ENCODE measurements at regions of chr11 and their contacts with region 1.

Region 1: DNA sequence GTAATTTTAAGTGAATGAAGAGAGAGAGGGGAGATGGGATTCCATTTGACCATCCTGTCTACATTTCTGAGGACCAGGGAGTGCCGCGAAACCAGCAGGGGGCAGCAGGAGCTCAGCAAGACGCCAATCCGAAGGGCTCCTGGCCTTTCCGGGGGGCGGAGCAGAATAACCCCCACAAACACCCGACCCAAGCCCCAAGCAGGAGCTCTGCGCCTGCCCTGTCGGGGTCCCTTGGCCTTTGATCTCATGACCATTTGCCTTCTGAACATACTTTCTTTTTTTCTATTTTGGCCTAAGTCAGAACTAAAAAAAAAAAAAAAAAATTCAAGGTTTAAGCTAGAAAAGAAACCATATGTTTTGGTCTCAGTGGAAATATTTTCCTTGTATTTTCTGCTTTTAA is 21.9 kb upstream of the SCN2B start:
- DNase-seq: peak; percentile 66 to 82 (median 75)
- ATAC-seq: peak; percentile 80
- H3K4me3 ChIP-seq: no peak overlapping the region
- H3K4me3 Mint-ChIP-seq: peak overlapping the region in 7 of 10 donors; percentile 12 to 53 (median 38)
- H3K27ac ChIP-seq: peak overlapping the region; percentile 10
- H3K27ac Mint-ChIP-seq: peak overlapping the region; percentile 16 to 84 (median 76)
- H3K4me1 ChIP-seq: peaks cover 28 to 47% of the 10 kb centered on the region in 2 donors
- H3K4me1 Mint-ChIP-seq: peaks cover 5 to 14% (median 11%) of the 10 kb centered on the region in 7 donors
- H3K27me3 ChIP-seq: no peaks in the 10 kb centered on the region
- H3K27me3 Mint-ChIP-seq: no peaks in the 10 kb centered on the region

Region 2: GRCh38 chr11:118216621-118217481 is 18.5 kb after region 1 on chr11:
- CTCF ChIA-PET with region 1: interaction called, 22 read pairs
- POLR2A ChIA-PET with region 1: interaction called, 5 read pairs
- intact Hi-C with region 1: loop called (anchors 1 to 2 kb)
- DNase-seq: peak in 3 of 9 donors; percentile 19 to 60 (median 39)
- ATAC-seq: peak; percentile 71
- H3K4me3 ChIP-seq: peak overlapping the region; percentile 37
- H3K4me3 Mint-ChIP-seq: peak overlapping the region in 9 of 10 donors; percentile 78 to 87 (median 83)
- H3K27ac ChIP-seq: peak overlapping the region; percentile 64
- H3K27ac Mint-ChIP-seq: peak overlapping the region in 7 of 9 donors; percentile 84 to 96 (median 92)
- H3K4me1 ChIP-seq: peaks cover 62 to 89% of the 10 kb centered on the region in 2 donors
- H3K4me1 Mint-ChIP-seq: peaks cover 75 to 100% (median 98%) of the 10 kb centered on the region in 7 donors
- H3K27me3 ChIP-seq: no peaks in the 10 kb centered on the region
- H3K27me3 Mint-ChIP-seq: no peaks in the 10 kb centered on the region

Region 3: DNA sequence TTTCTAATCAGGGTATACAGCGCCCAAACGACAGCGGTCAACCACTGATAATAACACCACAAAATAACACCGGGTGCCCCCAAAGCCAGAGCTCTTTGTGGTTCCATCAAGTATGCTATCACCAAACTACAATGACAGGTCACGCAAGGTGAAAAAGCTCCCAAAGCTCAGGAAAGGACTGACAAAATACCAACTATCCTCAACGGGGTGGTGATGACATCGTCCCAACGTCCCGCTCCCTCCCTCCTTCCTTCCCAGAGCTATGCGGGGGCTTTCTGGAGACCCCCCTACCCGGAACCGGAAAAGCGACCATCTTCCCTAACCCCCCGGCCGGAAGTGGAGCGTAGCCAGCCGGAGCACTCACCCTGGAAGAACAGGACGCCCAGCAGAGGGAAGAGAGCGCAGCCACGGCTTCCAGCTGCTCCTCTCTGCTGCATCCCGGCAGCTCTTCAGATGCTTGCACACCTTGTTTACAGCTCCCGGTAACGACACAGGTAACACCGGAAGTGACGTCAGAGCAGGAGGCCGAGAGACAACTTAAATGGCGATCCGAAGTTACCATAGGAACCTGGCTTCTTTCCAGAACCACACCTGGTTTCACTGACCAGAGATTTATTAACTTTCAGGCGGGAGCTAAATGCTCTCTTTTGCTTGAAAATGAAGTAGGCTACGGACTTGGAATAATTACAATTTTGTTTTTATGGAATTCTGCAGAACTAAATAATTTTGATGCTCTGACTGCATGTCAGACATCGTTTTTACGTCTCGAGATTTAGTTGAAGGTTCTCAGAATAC is 53.7 kb after region 1 on chr11 and contains the start of gene MPZL3:
- CTCF ChIA-PET with region 1: interaction called, 7 read pairs
- POLR2A ChIA-PET with region 1: interaction called, 3 read pairs
- intact Hi-C with region 1: loop called (anchors 2 kb)
- DNase-seq: peak; percentile 68 to 94 (median 87)
- ATAC-seq: peak; percentile 86
- H3K4me3 ChIP-seq: peak within 1 kb of the TSS; percentile 91
- H3K4me3 Mint-ChIP-seq: peak within 1 kb of the TSS; percentile 93 to 99 (median 96)
- H3K27ac ChIP-seq: peak within 1 kb of the TSS; percentile 93
- H3K27ac Mint-ChIP-seq: peak within 1 kb of the TSS; percentile 97 to 100 (median 99)
- H3K4me1 ChIP-seq: peaks cover 10 to 32% of the 10 kb centered on the region in 2 donors
- H3K4me1 Mint-ChIP-seq: peaks cover 16 to 52% (median 39%) of the 10 kb centered on the region in 7 donors
- H3K27me3 ChIP-seq: no peaks in the 10 kb centered on the region
- H3K27me3 Mint-ChIP-seq: no peaks in the 10 kb centered on the region
- total RNA-seq, gene MPZL3: 13.3 to 17.4 (median 17.0) TPM

Region 4: DNA sequence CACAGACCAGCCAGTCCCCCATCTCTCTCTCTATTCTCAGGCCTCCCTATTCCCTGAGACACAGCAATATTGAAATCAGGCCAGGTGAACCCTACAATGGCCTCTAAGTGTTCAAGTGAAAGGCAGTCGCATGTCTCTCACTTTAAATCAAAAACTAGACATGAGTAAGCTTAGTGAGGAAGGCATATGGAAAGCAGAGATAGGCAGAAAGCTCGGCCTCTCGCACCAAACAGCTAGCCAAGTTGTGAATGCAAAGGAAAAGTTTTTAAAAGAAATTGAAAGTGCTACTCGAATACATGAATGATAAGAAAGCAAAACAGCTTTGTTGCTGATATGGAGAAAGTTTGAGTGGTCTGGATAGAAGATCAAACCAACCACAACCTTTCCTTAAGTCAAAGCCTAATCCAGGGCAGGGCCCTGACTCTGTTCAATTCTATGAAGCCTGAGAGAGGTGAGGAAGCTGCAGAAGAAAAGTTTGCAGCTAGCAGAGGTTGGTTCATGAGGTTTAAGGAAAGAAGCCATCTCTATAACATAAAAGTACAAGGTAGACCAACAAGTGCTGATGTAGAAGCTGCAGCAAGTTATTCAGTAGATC is 85.5 kb after region 1 on chr11:
- CTCF ChIA-PET with region 1: interaction called, 30 read pairs
- POLR2A ChIA-PET with region 1: interaction called, 3 read pairs
- intact Hi-C with region 1: no loop called
- DNase-seq: peak in 1 of 9 donors; percentile 20
- ATAC-seq: no peak
- H3K4me3 ChIP-seq: no peak overlapping the region
- H3K4me3 Mint-ChIP-seq: peak overlapping the region in 8 of 10 donors; percentile 11 to 60 (median 42)
- H3K27ac ChIP-seq: peak overlapping the region; percentile 25
- H3K27ac Mint-ChIP-seq: peak overlapping the region; percentile 14 to 90 (median 83)
- H3K4me1 ChIP-seq: peaks cover 0 to 9% of the 10 kb centered on the region in 2 donors
- H3K4me1 Mint-ChIP-seq: peaks cover 23 to 43% (median 27%) of the 10 kb centered on the region in 7 donors
- H3K27me3 ChIP-seq: no peaks in the 10 kb centered on the region
- H3K27me3 Mint-ChIP-seq: no peaks in the 10 kb centered on the region

Region 5: DNA sequence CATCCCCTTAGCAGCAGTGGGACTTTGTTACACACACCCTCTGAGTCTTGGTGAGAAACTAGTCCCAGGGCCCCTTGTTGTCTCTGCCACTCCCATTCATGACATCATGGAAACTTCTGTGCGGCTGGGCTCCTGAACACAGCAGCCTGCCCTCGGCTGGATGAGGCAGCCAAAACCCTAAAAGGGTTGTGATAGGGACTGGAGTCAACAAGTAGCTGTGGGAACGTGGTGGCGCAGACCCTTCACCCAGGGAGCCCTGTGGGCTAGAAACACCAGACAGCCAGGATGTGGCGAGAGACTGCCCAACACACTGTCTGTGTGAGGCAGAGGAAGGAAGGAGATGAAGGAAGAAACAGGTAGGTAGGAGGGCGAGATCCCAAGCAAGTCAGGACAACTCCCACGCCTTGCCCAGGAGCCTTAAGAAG is 140.3 kb after region 1 on chr11:
- CTCF ChIA-PET with region 1: interaction called, 4 read pairs
- POLR2A ChIA-PET with region 1: interaction called, 6 read pairs
- intact Hi-C with region 1: loop called in 1 of 2 experiments (anchors 2 kb)
- DNase-seq: peak; percentile 46 to 99 (median 92)
- ATAC-seq: peak; percentile 82
- H3K4me3 ChIP-seq: peak overlapping the region; percentile 88
- H3K4me3 Mint-ChIP-seq: peak overlapping the region; percentile 89 to 98 (median 96)
- H3K27ac ChIP-seq: peak overlapping the region; percentile 96
- H3K27ac Mint-ChIP-seq: peak overlapping the region; percentile 95 to 100 (median 99)
- H3K4me1 ChIP-seq: peaks cover 46 to 50% of the 10 kb centered on the region in 2 donors
- H3K4me1 Mint-ChIP-seq: peaks cover 28 to 68% (median 55%) of the 10 kb centered on the region in 7 donors
- H3K27me3 ChIP-seq: no peaks in the 10 kb centered on the region
- H3K27me3 Mint-ChIP-seq: no peaks in the 10 kb centered on the region

Region 6: DNA sequence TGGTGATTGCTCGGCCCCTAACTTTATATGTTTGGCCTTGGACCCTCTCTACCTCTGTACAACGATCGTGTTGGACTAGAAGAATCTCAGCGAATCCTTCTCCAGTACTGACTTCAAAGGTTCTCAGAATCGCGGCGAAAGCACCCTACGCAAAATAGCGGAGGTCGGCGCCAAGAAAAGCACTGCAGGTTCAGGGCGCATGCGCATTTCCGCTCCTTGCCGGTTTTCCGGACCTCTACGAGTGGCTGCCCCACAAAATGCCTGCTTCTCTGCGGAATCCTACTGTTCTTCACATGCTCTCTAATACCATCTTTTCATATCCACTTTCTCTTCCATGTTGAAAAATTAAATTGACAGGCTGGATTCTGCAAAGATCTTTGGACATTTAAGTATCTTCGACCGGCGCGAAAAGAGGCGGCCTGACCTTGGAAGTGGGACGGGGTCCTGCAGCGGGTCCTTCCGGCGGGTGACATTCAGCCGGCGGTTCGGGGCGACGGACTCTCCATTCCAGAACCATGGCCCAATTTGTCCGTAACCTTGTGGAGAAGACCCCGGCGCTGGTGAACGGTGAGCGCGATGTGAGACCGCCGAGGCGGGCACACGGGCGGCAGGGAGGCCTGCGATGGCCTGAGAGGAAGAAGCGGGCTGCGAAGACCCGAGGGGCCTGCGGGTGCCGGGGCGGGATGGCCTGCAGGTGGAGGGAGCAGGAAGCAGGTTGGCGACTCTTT is 202.9 kb after region 1 on chr11 and contains the start of gene ATP5MG:
- CTCF ChIA-PET with region 1: no interaction called
- POLR2A ChIA-PET with region 1: no interaction called
- intact Hi-C with region 1: loop called in 1 of 2 experiments (anchors 5 kb)
- DNase-seq: peak; percentile 83 to 96 (median 93)
- ATAC-seq: peak; percentile 71
- H3K4me3 ChIP-seq: peak within 1 kb of the TSS; percentile 79
- H3K4me3 Mint-ChIP-seq: peak within 1 kb of the TSS; percentile 97 to 99 (median 98)
- H3K27ac ChIP-seq: peak within 1 kb of the TSS; percentile 97
- H3K27ac Mint-ChIP-seq: peak within 1 kb of the TSS; percentile 97 to 100 (median 100)
- H3K4me1 ChIP-seq: peaks cover 37 to 58% of the 10 kb centered on the region in 2 donors
- H3K4me1 Mint-ChIP-seq: peaks cover 39 to 78% (median 71%) of the 10 kb centered on the region in 7 donors
- H3K27me3 ChIP-seq: no peaks in the 10 kb centered on the region
- H3K27me3 Mint-ChIP-seq: peaks cover 0 to 2% (median 0%) of the 10 kb centered on the region in 5 donors
- total RNA-seq, gene ATP5MG: 140 to 241 (median 154) TPM

Measured in naive thymus-derived CD4-positive, alpha-beta T cell (primary cell).